Endothelial cell of umbilical vein (primary cell): ENCODE measurements at regions of chr1 and their contacts with region 1.

Region 1: GRCh38 chr1:74771913-74772515 is 39.1 kb downstream of the TYW3 start:
- DNase-seq: peak; percentile 58
- H3K4me3 ChIP-seq: no peak overlapping the region
- H3K27ac ChIP-seq: no peak overlapping the region
- H3K4me1 ChIP-seq: no peaks in the 10 kb centered on the region
- H3K27me3 ChIP-seq: peaks cover 8 to 44% of the 10 kb centered on the region in 2 experiments
- CTCF ChIP-seq: peak; percentile 48 to 52
- POLR2A ChIP-seq: no peak

Region 2: GRCh38 chr1:74689621-74690363 is 82.2 kb before region 1 on chr1:
- CTCF ChIA-PET with region 1: interaction called, 13 read pairs
- POLR2A ChIA-PET with region 1: no interaction called
- dilution Hi-C with region 1: no loop called
- intact Hi-C with region 1: no loop called
- DNase-seq: peak; percentile 63
- H3K4me3 ChIP-seq: no peak overlapping the region
- H3K27ac ChIP-seq: no peak overlapping the region
- H3K4me1 ChIP-seq: no peaks in the 10 kb centered on the region
- H3K27me3 ChIP-seq: no peaks in the 10 kb centered on the region
- CTCF ChIP-seq: peak; percentile 56 to 67
- POLR2A ChIP-seq: no peak

Region 3: DNA sequence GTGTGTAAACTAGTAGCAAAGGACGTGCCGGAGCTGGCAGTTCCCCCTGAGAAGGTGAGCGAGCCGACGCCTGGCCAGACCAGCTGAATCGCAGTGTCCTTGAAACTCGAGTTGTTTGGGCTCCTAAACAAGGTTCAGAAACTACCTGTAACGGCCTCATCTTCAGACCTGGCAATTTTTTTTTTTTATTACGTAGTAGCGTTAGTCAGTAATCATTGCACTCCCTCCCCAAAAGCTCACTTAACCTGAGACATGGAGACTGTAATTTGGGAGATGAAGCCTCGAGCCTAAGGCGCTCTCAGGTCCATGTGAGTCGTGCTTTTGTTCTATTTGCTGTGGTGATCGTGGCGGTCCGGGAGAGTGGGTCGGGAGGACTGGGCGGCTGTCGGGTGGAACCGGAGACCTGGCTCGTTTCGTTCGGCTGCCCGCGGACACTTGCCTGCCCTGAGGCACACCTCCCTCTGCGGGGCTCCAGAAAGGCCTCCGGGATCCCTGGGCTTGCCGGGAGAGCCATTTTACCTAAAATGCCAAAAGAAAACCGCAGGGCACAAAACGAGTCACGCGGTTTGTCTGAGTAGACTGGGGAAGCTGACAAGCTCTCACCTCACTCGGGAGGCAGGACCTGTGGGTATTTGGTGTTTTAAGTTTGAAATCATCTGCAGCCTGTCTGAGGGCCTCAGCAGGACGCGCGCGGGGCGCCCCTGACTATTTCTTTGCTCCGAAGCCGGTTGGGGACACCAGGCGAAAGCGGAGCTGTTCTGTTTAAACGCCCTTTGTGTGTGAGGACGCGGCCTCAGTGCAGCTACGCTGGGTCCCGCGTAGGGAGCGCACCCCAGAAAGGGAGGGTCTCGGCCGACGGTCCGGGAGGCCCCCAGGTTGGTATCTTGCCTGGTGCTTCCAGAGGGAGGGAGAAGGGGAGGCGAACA is 362.9 kb after region 1 on chr1:
- CTCF ChIA-PET with region 1: interaction called, 15 read pairs
- POLR2A ChIA-PET with region 1: no interaction called
- dilution Hi-C with region 1: no loop called
- intact Hi-C with region 1: loop called (anchors 5 kb)
- DNase-seq: peak; percentile 28
- H3K4me3 ChIP-seq: no peak overlapping the region
- H3K27ac ChIP-seq: no peak overlapping the region
- H3K4me1 ChIP-seq: no peaks in the 10 kb centered on the region
- H3K27me3 ChIP-seq: peaks cover 89 to 98% of the 10 kb centered on the region in 2 experiments
- CTCF ChIP-seq: no peak
- POLR2A ChIP-seq: no peak

Region 4: GRCh38 chr1:75203415-75204277 is 431.6 kb after region 1 on chr1:
- CTCF ChIA-PET with region 1: interaction called, 279 read pairs
- POLR2A ChIA-PET with region 1: no interaction called
- dilution Hi-C with region 1: loop called (anchors 25 kb)
- intact Hi-C with region 1: loop called (anchors 1 kb)
- DNase-seq: peak; percentile 61
- H3K4me3 ChIP-seq: no peak overlapping the region
- H3K27ac ChIP-seq: no peak overlapping the region
- H3K4me1 ChIP-seq: peaks cover 4% of the 10 kb centered on the region
- H3K27me3 ChIP-seq: peaks cover 0 to 7% of the 10 kb centered on the region in 2 experiments
- CTCF ChIP-seq: peak; percentile 48 to 59
- POLR2A ChIP-seq: no peak

Region 5: GRCh38 chr1:75632350-75632949 is 860.4 kb after region 1 on chr1:
- CTCF ChIA-PET with region 1: interaction called, 3 read pairs
- POLR2A ChIA-PET with region 1: no interaction called
- dilution Hi-C with region 1: no loop called
- intact Hi-C with region 1: loop called (anchors 1 kb)
- DNase-seq: peak; percentile 70
- H3K4me3 ChIP-seq: no peak overlapping the region
- H3K27ac ChIP-seq: no peak overlapping the region
- H3K4me1 ChIP-seq: no peaks in the 10 kb centered on the region
- H3K27me3 ChIP-seq: no peaks in the 10 kb centered on the region
- CTCF ChIP-seq: peak; percentile 64 to 70
- POLR2A ChIP-seq: no peak